PC-3 (cell line): ENCODE measurements at regions of chr5 and their contacts with region 1.

Region 1: GRCh38 chr5:69093771-69094482 is at the start of gene SLC30A5:
- DNase-seq: peak; percentile 99
- ATAC-seq: peak; percentile 99
- H3K4me3 ChIP-seq: peak within 1 kb of the TSS; percentile 78
- H3K27ac ChIP-seq: peak within 1 kb of the TSS; percentile 61
- H3K4me1 ChIP-seq: no peaks in the 10 kb centered on the region
- H3K27me3 ChIP-seq: no peaks in the 10 kb centered on the region
- CTCF ChIP-seq: peak; percentile 77
- total RNA-seq, gene SLC30A5: 54.7 and 55.3 TPM in 2 replicates

Region 2: DNA sequence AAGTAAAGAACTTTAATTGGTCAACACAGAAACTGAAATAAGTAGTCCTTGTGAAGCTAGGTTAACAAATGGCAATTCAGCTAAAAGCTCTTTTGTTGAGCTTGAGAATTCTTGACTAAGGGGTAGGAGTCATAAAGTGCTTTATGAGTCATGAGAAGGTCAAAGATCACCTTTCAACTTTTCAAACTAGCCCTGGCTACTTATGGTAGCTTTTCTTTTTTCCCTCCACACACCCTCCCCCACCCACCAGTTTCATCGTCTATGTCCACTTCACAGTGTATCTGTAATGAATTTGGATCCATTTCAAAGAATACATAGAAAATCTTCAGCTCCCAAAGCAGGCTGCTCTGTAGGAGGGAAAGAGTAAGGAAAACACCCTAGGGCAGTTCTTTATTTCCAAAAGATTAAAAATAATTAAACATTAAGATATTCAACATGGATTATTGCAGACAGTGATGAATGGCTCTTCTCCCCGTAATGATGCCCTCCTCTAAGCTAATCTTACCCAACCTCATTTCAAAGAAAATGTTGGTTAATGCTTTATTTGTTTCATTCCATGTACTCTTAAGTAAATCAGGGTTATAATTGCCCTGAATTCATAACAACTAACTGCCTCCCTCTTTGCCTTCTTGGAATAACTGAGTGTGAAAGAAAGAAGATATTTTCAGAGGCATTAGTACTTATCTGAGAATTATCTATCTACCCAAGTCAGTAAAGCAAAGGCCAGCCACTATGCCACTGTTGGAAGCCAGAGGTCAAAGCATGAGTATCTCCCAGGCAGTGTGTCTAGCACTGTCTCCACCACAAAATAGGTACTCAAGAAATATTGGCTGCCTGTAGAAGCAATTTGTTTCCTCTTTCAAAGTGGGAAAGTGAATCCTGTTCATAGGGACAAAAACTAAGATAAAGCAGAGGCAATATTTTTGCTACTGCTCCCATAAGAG is 587.7 kb before region 1 on chr5:
- CTCF ChIA-PET with region 1: no interaction called
- POLR2A ChIA-PET with region 1: no interaction called
- intact Hi-C with region 1: no loop called
- DNase-seq: peak; percentile 19
- ATAC-seq: no peak
- H3K4me3 ChIP-seq: no peak overlapping the region
- H3K27ac ChIP-seq: no peak overlapping the region
- H3K4me1 ChIP-seq: no peaks in the 10 kb centered on the region
- H3K27me3 ChIP-seq: no peaks in the 10 kb centered on the region
- CTCF ChIP-seq: no peak

Region 3: GRCh38 chr5:69166686-69167492 is 73.0 kb after region 1 on chr5 and contains the start of gene CCNB1:
- CTCF ChIA-PET with region 1: no interaction called
- POLR2A ChIA-PET with region 1: no interaction called
- intact Hi-C with region 1: loop called (anchors 10 kb)
- DNase-seq: peak; percentile 97
- ATAC-seq: peak; percentile 98
- H3K4me3 ChIP-seq: peak within 1 kb of the TSS; percentile 97
- H3K27ac ChIP-seq: peak within 1 kb of the TSS; percentile 70
- H3K4me1 ChIP-seq: peaks cover 20% of the 10 kb centered on the region
- H3K27me3 ChIP-seq: no peaks in the 10 kb centered on the region
- CTCF ChIP-seq: no peak
- total RNA-seq, gene CCNB1: 134 and 185 TPM in 2 replicates

Region 4: GRCh38 chr5:69189162-69190086 is 95.5 kb after region 1 on chr5 and contains the start of gene CENPH:
- CTCF ChIA-PET with region 1: interaction called, 3 read pairs
- POLR2A ChIA-PET with region 1: no interaction called
- intact Hi-C with region 1: loop called (anchors 1 kb)
- DNase-seq: peak; percentile 91
- ATAC-seq: peak; percentile 83
- H3K4me3 ChIP-seq: peak within 1 kb of the TSS; percentile 82
- H3K27ac ChIP-seq: peak within 1 kb of the TSS; percentile 86
- H3K4me1 ChIP-seq: no peaks in the 10 kb centered on the region
- H3K27me3 ChIP-seq: no peaks in the 10 kb centered on the region
- CTCF ChIP-seq: no peak
- total RNA-seq, gene CENPH: 22.1 and 27.8 TPM in 2 replicates

Region 5: GRCh38 chr5:69234457-69235268 is 140.7 kb after region 1 on chr5 and contains the start of gene CDK7:
- CTCF ChIA-PET with region 1: no interaction called
- POLR2A ChIA-PET with region 1: no interaction called
- intact Hi-C with region 1: loop called (anchors 5 kb)
- DNase-seq: peak; percentile 91
- ATAC-seq: peak; percentile 91
- H3K4me3 ChIP-seq: peak within 1 kb of the TSS; percentile 90
- H3K27ac ChIP-seq: peak within 1 kb of the TSS; percentile 29; the same call in 1 of the 2 replicates
- H3K4me1 ChIP-seq: peaks cover 33% of the 10 kb centered on the region
- H3K27me3 ChIP-seq: no peaks in the 10 kb centered on the region
- CTCF ChIP-seq: no peak
- total RNA-seq, gene CDK7: 19.9 and 26.6 TPM in 2 replicates

Region 6: GRCh38 chr5:69293895-69294294 is 200.0 kb after region 1 on chr5:
- CTCF ChIA-PET with region 1: no interaction called
- POLR2A ChIA-PET with region 1: no interaction called
- intact Hi-C with region 1: loop called (anchors 10 kb)
- DNase-seq: no peak
- ATAC-seq: no peak
- H3K4me3 ChIP-seq: no peak overlapping the region
- H3K27ac ChIP-seq: no peak overlapping the region
- H3K4me1 ChIP-seq: peaks cover 9% of the 10 kb centered on the region; the same call in 1 of the 2 replicates
- H3K27me3 ChIP-seq: no peaks in the 10 kb centered on the region
- CTCF ChIP-seq: no peak

Region 7: GRCh38 chr5:69334793-69335268 is 240.9 kb after region 1 on chr5:
- CTCF ChIA-PET with region 1: interaction called, 11 read pairs
- POLR2A ChIA-PET with region 1: no interaction called
- intact Hi-C with region 1: loop called (anchors 1 kb)
- DNase-seq: peak; percentile 74
- ATAC-seq: peak; percentile 57
- H3K4me3 ChIP-seq: no peak overlapping the region
- H3K27ac ChIP-seq: no peak overlapping the region
- H3K4me1 ChIP-seq: peaks cover 8% of the 10 kb centered on the region
- H3K27me3 ChIP-seq: no peaks in the 10 kb centered on the region
- CTCF ChIP-seq: peak; percentile 67

Region 8: GRCh38 chr5:69369369-69370121 is 275.6 kb after region 1 on chr5 and contains the starts of genes AK6, RAD17 and TAF9:
- CTCF ChIA-PET with region 1: interaction called, 6 read pairs
- POLR2A ChIA-PET with region 1: no interaction called
- intact Hi-C with region 1: loop called (anchors 2 kb)
- DNase-seq: peak; percentile 76
- ATAC-seq: peak; percentile 93
- H3K4me3 ChIP-seq: peak within 1 kb of the TSS; percentile 100
- H3K27ac ChIP-seq: peak within 1 kb of the TSS; percentile 95
- H3K4me1 ChIP-seq: peaks cover 16% of the 10 kb centered on the region; the same call in 1 of the 2 replicates
- H3K27me3 ChIP-seq: no peaks in the 10 kb centered on the region
- CTCF ChIP-seq: no peak
- total RNA-seq, gene AK6: 25.3 and 37.4 TPM in 2 replicates
- total RNA-seq, gene RAD17: 13.5 TPM in 2 replicates
- total RNA-seq, gene TAF9: 61.3 and 61.6 TPM in 2 replicates